Gastrocnemius medialis (tissue), 4 donors: ENCODE measurements at regions of chr15 and their contacts with region 1.

Region 1: GRCh38 chr15:40367686-40368611 is 9.9 kb downstream of the DISP2 start:
- DNase-seq: peak; percentile 64 to 86
- ATAC-seq: peak; percentile 70 to 78
- H3K4me3 ChIP-seq: peak overlapping the region; percentile 35 to 51 (median 40)
- H3K27ac ChIP-seq: peak overlapping the region; percentile 77 to 92 (median 84)
- H3K4me1 ChIP-seq: peaks cover 18 to 20% of the 10 kb centered on the region in 2 donors
- H3K27me3 ChIP-seq: no peaks in the 10 kb centered on the region
- CTCF ChIP-seq: peak; percentile 81 to 97 (median 93)
- POLR2A ChIP-seq: no peak

Region 2: DNA sequence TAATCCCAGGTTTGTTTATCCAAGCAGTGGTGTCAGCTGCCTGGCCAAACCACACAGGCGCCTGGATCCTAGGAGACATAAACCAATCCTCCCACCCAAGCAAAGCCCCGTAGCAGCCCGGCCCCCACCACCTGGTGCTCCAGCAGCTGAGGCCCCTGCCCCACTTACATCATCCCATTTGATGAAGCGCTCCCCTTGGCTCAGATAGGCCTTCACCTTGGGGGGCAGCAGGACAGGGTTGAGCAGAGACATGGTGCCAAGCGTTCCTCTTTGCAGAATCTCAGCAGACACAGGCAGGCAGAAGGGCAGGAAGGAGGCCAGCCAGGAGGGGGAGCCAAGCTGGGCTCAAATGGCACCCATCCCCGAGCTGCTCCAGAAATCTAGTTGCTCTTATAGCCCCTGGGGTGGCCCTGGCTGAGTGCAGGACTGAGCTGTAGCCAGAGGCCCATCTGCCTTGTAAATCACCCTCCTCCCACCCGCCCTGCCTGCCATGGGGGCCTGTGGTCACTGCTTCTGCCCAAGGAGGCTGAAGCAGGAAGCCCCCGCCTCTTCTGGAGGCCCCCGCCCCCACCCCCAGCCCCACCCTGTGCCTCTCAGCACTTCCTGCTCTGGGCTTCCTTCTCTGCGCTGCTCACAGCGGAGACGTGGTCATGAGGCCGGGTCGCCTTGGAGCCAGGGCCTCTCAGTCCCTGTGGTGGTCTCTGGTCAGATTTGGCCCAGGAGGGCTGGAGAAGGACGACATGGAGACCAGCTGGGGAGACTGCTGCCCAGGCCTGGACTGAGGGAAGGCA is 60.3 kb before region 1 on chr15 and contains the start of gene PLCB2:
- in situ Hi-C with region 1: no loop called
- intact Hi-C with region 1: no loop called
- DNase-seq: peak in 1 of 2 donors; percentile 31
- ATAC-seq: no peak
- H3K4me3 ChIP-seq: peak within 1 kb of the TSS in 1 of 4 donors; percentile 27
- H3K27ac ChIP-seq: peak within 1 kb of the TSS in 1 of 4 donors; percentile 25
- H3K4me1 ChIP-seq: no peaks in the 10 kb centered on the region
- H3K27me3 ChIP-seq: no peaks in the 10 kb centered on the region
- CTCF ChIP-seq: no peak
- POLR2A ChIP-seq: no peak
- total RNA-seq, gene PLCB2: 0.72 to 2.0 (median 1.4) TPM in 3 of 4 donors, not detected in the other

Region 3: DNA sequence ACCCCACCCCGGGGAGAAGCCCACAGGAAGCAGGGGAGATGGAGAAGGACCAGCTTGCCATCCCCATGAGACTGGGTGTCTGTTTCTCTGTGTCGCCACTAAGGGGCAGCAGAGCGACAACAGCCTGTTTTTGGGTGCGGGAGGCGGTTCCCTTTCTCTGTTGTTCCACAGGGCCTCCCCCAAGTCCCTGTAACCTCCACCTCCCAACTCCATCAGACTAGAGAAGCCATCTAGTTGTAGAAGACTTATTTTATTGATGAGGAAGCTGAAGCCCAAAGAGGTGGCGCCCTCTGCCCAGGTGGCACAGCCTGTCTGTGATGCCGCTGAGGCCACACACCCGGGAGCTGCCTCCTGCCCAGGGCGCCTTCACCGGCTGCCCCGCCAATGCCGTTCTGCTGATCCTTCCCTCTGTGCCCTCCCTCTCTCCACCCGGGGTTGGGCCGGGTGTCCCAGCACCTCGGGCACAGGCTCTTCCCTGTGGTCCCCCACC is 23.3 kb before region 1 on chr15:
- in situ Hi-C with region 1: no loop called
- intact Hi-C with region 1: loop called (anchors 1 kb)
- DNase-seq: peak in 1 of 2 donors; percentile 53
- ATAC-seq: no peak
- H3K4me3 ChIP-seq: no peak overlapping the region
- H3K27ac ChIP-seq: no peak overlapping the region
- H3K4me1 ChIP-seq: peaks cover 19 to 25% of the 10 kb centered on the region in 2 donors
- H3K27me3 ChIP-seq: no peaks in the 10 kb centered on the region
- CTCF ChIP-seq: peak; percentile 61 to 85 (median 75)
- POLR2A ChIP-seq: no peak

Region 4: GRCh38 chr15:40409400-40409831 is 41.5 kb after region 1 on chr15:
- in situ Hi-C with region 1: no loop called
- intact Hi-C with region 1: no loop called
- DNase-seq: no peak
- ATAC-seq: no peak
- H3K4me3 ChIP-seq: no peak overlapping the region
- H3K27ac ChIP-seq: no peak overlapping the region
- H3K4me1 ChIP-seq: peaks cover 8 to 11% of the 10 kb centered on the region in 2 donors
- H3K27me3 ChIP-seq: no peaks in the 10 kb centered on the region
- CTCF ChIP-seq: no peak
- POLR2A ChIP-seq: no peak